ENCODE measurements at regions of chr7 and their contacts with region 1.

Region 1: GRCh38 chr7:106629516-106629915 is 31.4 kb downstream of the CCDC71L start:
- DNase-seq: no peak
- H3K4me3 ChIP-seq: no peak overlapping the region
- H3K27ac ChIP-seq: no peak overlapping the region
- H3K4me1 ChIP-seq: no peaks in the 10 kb centered on the region
- H3K27me3 ChIP-seq: no peaks in the 10 kb centered on the region
- CTCF ChIP-seq: no peak
- EP300 ChIP-seq: no peak
- POLR2A ChIP-seq: no peak

Region 2: DNA sequence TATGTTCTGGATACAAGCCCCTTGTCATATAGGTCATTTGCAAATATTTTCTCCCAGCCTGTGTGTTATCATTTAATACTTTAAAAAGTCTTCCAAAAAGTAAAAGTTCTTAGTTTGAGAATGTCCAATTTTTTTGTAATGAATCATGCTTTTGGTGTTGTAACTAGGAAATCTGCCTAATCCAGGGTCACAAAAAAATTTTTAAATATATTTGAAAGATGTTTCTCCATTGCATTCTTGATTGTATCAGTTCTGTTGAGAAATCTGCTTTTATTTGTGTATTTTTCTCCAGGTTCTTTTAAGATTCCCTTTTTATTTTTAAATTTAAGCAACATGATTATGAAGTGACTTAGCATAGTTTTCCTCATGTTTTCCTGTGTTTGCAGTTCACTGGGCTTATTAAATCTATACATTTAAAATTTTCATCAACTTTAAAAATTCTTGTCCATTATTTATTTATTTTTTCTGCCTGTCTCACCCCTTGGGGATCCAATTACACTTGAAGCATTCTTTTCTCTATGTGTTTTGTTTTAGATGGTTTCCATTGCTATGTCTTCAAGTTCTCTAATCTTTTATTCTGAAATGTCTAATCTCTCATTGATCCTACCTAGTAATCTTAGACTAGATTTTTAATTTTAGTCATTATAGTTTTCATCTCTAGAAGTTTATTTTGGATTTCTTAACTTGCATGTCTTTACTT is 15.5 kb before region 1 on chr7:
- intact Hi-C with region 1: loop called in 1 of 4 experiments (anchors 2 kb)
- DNase-seq: no peak
- H3K4me3 ChIP-seq: no peak overlapping the region
- H3K27ac ChIP-seq: no peak overlapping the region
- H3K4me1 ChIP-seq: no peaks in the 10 kb centered on the region
- H3K27me3 ChIP-seq: no peaks in the 10 kb centered on the region
- CTCF ChIP-seq: no peak
- EP300 ChIP-seq: no peak
- POLR2A ChIP-seq: no peak

Region 3: GRCh38 chr7:106679153-106679931 is 49.8 kb after region 1 on chr7:
- intact Hi-C with region 1: no loop called
- DNase-seq: no peak
- H3K4me3 ChIP-seq: no peak overlapping the region
- H3K27ac ChIP-seq: no peak overlapping the region
- H3K4me1 ChIP-seq: no peaks in the 10 kb centered on the region
- H3K27me3 ChIP-seq: no peaks in the 10 kb centered on the region
- CTCF ChIP-seq: no peak
- EP300 ChIP-seq: no peak
- POLR2A ChIP-seq: no peak

Region 4: GRCh38 chr7:107150375-107151073 is 521.0 kb after region 1 on chr7:
- intact Hi-C with region 1: no loop called
- DNase-seq: peak; percentile 68 to 89 (median 83)
- H3K4me3 ChIP-seq: no peak overlapping the region
- H3K27ac ChIP-seq: no peak overlapping the region
- H3K4me1 ChIP-seq: no peaks in the 10 kb centered on the region
- H3K27me3 ChIP-seq: no peaks in the 10 kb centered on the region
- CTCF ChIP-seq: peak; percentile 44 to 78 (median 61)
- EP300 ChIP-seq: no peak
- POLR2A ChIP-seq: no peak

Measured in ovary (tissue), 10 donors.